ENCODE measurements at regions of chr1 and their contacts with region 1.

Region 1: DNA sequence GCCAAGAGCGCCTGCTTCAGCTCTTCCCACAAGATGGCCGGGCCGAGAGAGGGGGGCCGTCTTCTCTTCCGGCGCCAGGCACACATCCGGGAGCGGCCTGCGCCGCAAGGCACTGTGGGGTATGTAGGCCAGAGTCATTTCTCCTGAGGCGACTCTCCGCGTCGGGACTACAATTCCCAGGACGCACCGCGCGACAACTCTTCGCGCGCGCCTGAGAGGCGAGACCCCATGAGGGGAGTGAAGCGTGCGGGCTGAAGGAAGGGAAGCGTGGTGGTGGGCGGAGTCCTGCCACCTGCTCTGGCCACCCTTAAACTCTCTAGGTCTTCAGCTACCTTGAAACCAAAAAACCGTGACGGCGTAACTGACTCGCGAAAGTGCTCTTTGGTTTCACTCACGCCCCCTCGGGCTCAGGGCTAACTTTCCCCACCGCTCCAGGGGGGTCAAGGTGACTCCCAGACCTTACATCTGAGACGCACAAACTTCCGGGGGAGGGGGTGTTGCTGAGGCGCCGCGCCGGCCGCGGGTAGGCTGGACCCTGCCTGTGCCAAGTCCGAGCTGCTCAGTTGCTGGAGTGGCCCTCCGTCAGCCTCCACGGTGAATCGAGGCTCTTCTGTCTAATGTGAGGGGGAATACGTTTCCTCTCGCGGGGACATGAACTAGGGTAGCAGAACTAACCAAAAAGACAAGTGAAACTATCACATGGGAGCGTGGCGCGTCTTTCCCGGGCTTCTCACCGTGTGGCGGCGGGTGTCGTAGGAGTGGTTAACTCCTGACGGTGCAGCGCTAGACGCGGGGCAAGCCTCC is at the start of gene SERBP1:
- DNase-seq: peak; percentile 91 to 98
- ATAC-seq: peak; percentile 82 to 95 (median 85)
- H3K4me3 ChIP-seq: peak within 1 kb of the TSS; percentile 80
- H3K4me3 Mint-ChIP-seq: peak within 1 kb of the TSS; percentile 100
- H3K27ac ChIP-seq: peak within 1 kb of the TSS; percentile 98
- H3K27ac Mint-ChIP-seq: peak within 1 kb of the TSS; percentile 99 to 100
- H3K4me1 ChIP-seq: peaks cover 5% of the 10 kb centered on the region
- H3K4me1 Mint-ChIP-seq: peaks cover 60 to 62% of the 10 kb centered on the region in 2 donors
- H3K27me3 ChIP-seq: no peaks in the 10 kb centered on the region
- H3K27me3 Mint-ChIP-seq: peaks cover 0 to 7% of the 10 kb centered on the region in 2 donors
- CTCF ChIP-seq: no peak
- total RNA-seq, gene SERBP1: 137 to 183 (median 149) TPM

Region 2: GRCh38 chr1:66929999-66930822 is 500.3 kb before region 1 on chr1:
- intact Hi-C with region 1: loop called (anchors 10 kb)
- DNase-seq: peak; percentile 94 to 97
- ATAC-seq: peak; percentile 73 to 93 (median 76)
- H3K4me3 ChIP-seq: peak overlapping the region; percentile 92
- H3K4me3 Mint-ChIP-seq: peak overlapping the region; percentile 100
- H3K27ac ChIP-seq: peak overlapping the region; percentile 92
- H3K27ac Mint-ChIP-seq: peak overlapping the region; percentile 95 to 98
- H3K4me1 ChIP-seq: peaks cover 18% of the 10 kb centered on the region
- H3K4me1 Mint-ChIP-seq: peaks cover 57 to 61% of the 10 kb centered on the region in 2 donors
- H3K27me3 ChIP-seq: no peaks in the 10 kb centered on the region
- H3K27me3 Mint-ChIP-seq: no peaks in the 10 kb centered on the region
- CTCF ChIP-seq: no peak

Region 3: GRCh38 chr1:67174716-67175284 is 255.8 kb before region 1 on chr1:
- intact Hi-C with region 1: no loop called
- DNase-seq: no peak
- ATAC-seq: no peak
- H3K4me3 ChIP-seq: no peak overlapping the region
- H3K4me3 Mint-ChIP-seq: no peak overlapping the region
- H3K27ac ChIP-seq: no peak overlapping the region
- H3K27ac Mint-ChIP-seq: no peak overlapping the region
- H3K4me1 ChIP-seq: peaks cover 11% of the 10 kb centered on the region
- H3K4me1 Mint-ChIP-seq: peaks cover 30 to 31% of the 10 kb centered on the region in 2 donors
- H3K27me3 ChIP-seq: no peaks in the 10 kb centered on the region
- H3K27me3 Mint-ChIP-seq: peaks cover 0 to 3% of the 10 kb centered on the region in 2 donors
- CTCF ChIP-seq: no peak

Region 4: DNA sequence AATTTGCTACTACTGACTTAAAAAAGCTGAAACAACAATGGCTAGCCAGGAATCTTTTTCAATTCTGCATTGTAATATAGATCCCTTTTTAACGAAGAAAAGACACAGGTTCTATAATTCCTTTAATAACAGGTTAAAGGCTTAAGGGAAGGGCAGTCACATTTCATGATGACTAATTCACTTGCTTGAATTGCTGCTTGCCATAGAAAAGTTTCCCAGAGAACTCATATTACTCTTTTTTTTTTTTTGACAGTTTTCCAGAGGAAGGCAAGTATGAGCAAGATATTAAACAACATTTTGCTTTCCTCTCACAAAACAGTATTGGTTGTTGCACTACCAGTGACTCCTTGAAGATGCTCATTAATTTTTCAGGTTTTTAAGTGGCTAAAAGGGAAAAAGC is 203.4 kb before region 1 on chr1:
- intact Hi-C with region 1: loop called (anchors 5 kb)
- DNase-seq: no peak
- ATAC-seq: peak in 1 of 3 donors; percentile 8
- H3K4me3 ChIP-seq: no peak overlapping the region
- H3K4me3 Mint-ChIP-seq: peak overlapping the region; percentile 82
- H3K27ac ChIP-seq: peak overlapping the region; percentile 70
- H3K27ac Mint-ChIP-seq: peak overlapping the region; percentile 90 to 94
- H3K4me1 ChIP-seq: peaks cover 26% of the 10 kb centered on the region
- H3K4me1 Mint-ChIP-seq: peaks cover 40 to 46% of the 10 kb centered on the region in 2 donors
- H3K27me3 ChIP-seq: no peaks in the 10 kb centered on the region
- H3K27me3 Mint-ChIP-seq: no peaks in the 10 kb centered on the region
- CTCF ChIP-seq: no peak

Region 5: GRCh38 chr1:67332653-67333529 is 97.7 kb before region 1 on chr1:
- intact Hi-C with region 1: loop called (anchors 1 kb)
- DNase-seq: peak in 1 of 2 donors; percentile 79
- ATAC-seq: peak; percentile 71 to 87 (median 85)
- H3K4me3 ChIP-seq: no peak overlapping the region
- H3K4me3 Mint-ChIP-seq: peak overlapping the region; percentile 71
- H3K27ac ChIP-seq: peak overlapping the region; percentile 84
- H3K27ac Mint-ChIP-seq: peak overlapping the region; percentile 82 to 85
- H3K4me1 ChIP-seq: peaks cover 50% of the 10 kb centered on the region
- H3K4me1 Mint-ChIP-seq: peaks cover 63 to 66% of the 10 kb centered on the region in 2 donors
- H3K27me3 ChIP-seq: no peaks in the 10 kb centered on the region
- H3K27me3 Mint-ChIP-seq: no peaks in the 10 kb centered on the region
- CTCF ChIP-seq: no peak

Region 6: DNA sequence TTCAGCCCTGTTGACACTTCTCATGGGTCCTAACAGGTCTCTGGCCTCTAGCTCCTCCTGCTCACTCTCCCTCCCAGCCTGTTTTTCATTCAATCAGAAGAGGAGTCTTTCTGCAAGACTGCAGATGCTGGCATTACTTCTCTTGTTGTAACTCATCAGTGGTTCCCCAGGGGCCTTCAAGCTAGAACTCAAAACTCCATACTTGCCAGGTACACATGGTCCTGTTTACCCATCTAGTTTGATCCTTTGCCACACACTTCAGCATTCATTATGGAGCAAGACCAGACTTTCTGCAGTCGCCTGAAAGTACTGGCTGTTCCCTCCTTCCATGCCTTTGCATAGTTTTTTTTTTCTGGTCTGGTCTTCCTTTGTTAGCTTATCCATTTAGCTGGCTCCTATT is 48.3 kb before region 1 on chr1:
- intact Hi-C with region 1: no loop called
- DNase-seq: no peak
- ATAC-seq: no peak
- H3K4me3 ChIP-seq: no peak overlapping the region
- H3K4me3 Mint-ChIP-seq: no peak overlapping the region
- H3K27ac ChIP-seq: no peak overlapping the region
- H3K27ac Mint-ChIP-seq: no peak overlapping the region
- H3K4me1 ChIP-seq: no peaks in the 10 kb centered on the region
- H3K4me1 Mint-ChIP-seq: peaks cover 0 to 4% of the 10 kb centered on the region in 2 donors
- H3K27me3 ChIP-seq: no peaks in the 10 kb centered on the region
- H3K27me3 Mint-ChIP-seq: no peaks in the 10 kb centered on the region
- CTCF ChIP-seq: no peak

Region 7: GRCh38 chr1:67685067-67685557 is 254.6 kb after region 1 on chr1 and contains the start of gene GADD45A:
- intact Hi-C with region 1: loop called (anchors 1 kb)
- DNase-seq: peak; percentile 95 to 98
- ATAC-seq: peak; percentile 85 to 96 (median 90)
- H3K4me3 ChIP-seq: peak within 1 kb of the TSS; percentile 94
- H3K4me3 Mint-ChIP-seq: peak within 1 kb of the TSS; percentile 96
- H3K27ac ChIP-seq: peak within 1 kb of the TSS; percentile 63
- H3K27ac Mint-ChIP-seq: peak within 1 kb of the TSS; percentile 81 to 94
- H3K4me1 ChIP-seq: peaks cover 14% of the 10 kb centered on the region
- H3K4me1 Mint-ChIP-seq: peaks cover 24 to 32% of the 10 kb centered on the region in 2 donors
- H3K27me3 ChIP-seq: no peaks in the 10 kb centered on the region
- H3K27me3 Mint-ChIP-seq: no peaks in the 10 kb centered on the region
- CTCF ChIP-seq: no peak
- total RNA-seq, gene GADD45A: 21.8 to 30.3 (median 26.6) TPM

Measured in natural killer cell (primary cell).